ENCODE measurements at regions of chr15 and their contacts with region 1.

Region 1: DNA sequence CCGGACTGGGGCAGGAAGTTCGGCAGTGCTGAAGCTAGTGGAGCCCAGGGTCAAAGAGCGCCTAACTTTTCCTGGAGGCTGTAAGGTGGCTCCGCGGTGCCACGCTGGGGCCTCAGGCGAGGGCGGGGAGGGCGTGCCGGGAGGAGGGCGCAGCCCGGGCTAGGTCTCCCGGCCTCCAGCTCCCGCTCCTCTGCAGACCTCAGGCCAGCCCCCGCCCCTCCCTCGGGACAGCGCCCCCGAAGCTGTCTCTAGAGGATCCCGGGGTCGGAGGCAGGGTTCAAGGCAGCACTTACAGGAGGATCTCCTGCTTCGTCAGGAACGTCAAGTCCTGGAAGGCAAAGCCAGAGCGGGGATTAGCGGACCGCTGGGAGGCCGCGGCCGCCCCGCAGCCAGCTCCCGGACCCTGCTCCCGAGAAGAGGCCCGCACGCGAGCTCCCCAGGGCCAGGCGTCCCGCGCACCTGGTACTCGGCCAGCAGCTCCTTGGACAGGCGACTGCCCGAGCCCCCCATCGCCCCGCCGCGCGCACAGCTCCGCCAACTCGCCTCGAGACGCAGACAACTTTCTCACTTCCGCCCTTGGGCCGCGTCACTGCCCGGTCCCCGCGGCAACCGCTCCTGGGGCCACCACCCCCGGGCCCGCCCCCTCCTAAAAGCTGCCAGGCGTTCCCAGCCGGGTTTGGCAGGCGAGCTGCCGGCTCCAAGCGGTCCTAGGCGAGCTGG is at the start of gene CIB1:
- DNase-seq: peak in 8 of 9 experiments; percentile 32 to 98 (median 94)
- ATAC-seq: peak; percentile 76
- H3K4me3 ChIP-seq: peak within 1 kb of the TSS; percentile 73 to 86
- H3K4me3 Mint-ChIP-seq: peak within 1 kb of the TSS; percentile 94
- H3K27ac ChIP-seq: peak within 1 kb of the TSS; percentile 93
- H3K27ac Mint-ChIP-seq: peak within 1 kb of the TSS; percentile 98
- H3K4me1 ChIP-seq: peaks cover 47% of the 10 kb centered on the region
- H3K4me1 Mint-ChIP-seq: peaks cover 60% of the 10 kb centered on the region
- H3K27me3 ChIP-seq: no peaks in the 10 kb centered on the region
- H3K27me3 Mint-ChIP-seq: no peaks in the 10 kb centered on the region
- CTCF ChIP-seq: no peak
- total RNA-seq, gene CIB1: 251 to 268 TPM

Region 2: DNA sequence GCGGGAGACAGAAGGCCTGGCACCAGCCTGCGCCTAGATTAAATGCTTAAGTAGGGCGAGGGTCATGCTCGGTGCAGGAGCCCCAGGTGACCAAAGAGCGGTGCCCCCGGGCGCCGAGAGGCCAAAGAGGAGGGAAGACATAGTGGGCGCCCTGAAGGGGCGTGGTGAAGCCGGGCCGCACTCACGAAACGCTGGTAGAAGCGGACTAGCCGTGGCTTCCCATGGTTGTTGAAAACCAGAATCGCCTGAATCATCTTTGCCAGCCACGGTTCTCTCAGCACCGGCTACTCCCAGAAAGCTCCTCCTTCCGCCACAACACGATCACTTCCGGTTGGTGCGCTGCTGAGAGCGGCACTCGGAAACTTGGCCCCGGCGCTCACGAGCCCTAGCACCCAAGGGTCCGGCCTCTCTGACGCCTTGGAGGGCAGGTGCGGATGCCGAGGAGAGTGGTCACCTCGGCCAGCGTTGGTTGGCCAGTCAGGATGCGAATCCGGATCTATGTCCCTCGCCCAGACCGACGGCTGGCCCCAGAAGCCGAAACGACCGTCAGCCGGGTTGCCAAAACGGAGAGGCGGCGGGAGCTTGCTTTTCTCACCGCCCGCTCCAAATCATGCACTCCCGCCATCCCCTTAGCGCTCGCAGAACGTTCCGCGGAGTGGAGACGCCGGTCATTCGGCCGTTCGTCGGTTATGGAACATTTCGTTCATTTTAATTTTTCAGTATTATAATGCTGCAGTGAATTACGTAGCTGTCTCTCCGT is 339.7 kb before region 1 on chr15 and contains the start of gene AP3S2:
- CTCF ChIA-PET with region 1: no interaction called
- POLR2A ChIA-PET with region 1: interaction called, 3 read pairs
- intact Hi-C with region 1: loop called in 1 of 2 experiments (anchors 10 kb)
- DNase-seq: peak; percentile 78 to 93 (median 88)
- ATAC-seq: peak; percentile 92
- H3K4me3 ChIP-seq: peak within 1 kb of the TSS; percentile 80 to 91
- H3K4me3 Mint-ChIP-seq: peak within 1 kb of the TSS; percentile 93
- H3K27ac ChIP-seq: peak within 1 kb of the TSS; percentile 73 to 75
- H3K27ac Mint-ChIP-seq: peak within 1 kb of the TSS; percentile 95
- H3K4me1 ChIP-seq: peaks cover 18% of the 10 kb centered on the region
- H3K4me1 Mint-ChIP-seq: peaks cover 30% of the 10 kb centered on the region
- H3K27me3 ChIP-seq: no peaks in the 10 kb centered on the region
- H3K27me3 Mint-ChIP-seq: no peaks in the 10 kb centered on the region
- CTCF ChIP-seq: no peak
- total RNA-seq, gene AP3S2: 14.2 to 16.0 TPM

Region 3: DNA sequence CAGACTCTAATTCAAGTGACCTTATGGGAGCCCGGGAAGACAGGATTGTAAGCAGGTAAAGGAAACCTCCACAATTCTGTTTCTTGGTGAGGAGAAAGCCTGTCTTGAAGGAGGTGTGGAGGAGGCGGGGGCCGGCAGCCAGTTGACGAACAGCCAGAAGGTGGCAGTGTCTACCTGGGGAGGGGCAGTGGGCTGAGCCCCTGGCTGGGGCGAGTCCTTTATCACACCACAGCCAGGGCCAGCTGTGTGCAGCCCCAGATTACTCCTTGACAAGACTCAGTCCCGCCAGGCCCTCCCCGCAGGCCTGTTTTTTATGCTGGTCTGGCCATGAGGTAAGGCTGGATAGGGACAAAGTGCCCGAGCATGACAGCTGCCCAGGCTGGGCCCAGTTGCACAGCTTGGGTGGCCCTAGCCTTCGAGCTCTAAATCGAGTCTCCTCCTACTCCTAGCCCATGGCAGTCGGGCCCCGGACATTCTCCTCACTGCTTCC is 90.3 kb before region 1 on chr15:
- CTCF ChIA-PET with region 1: no interaction called
- POLR2A ChIA-PET with region 1: no interaction called
- intact Hi-C with region 1: loop called (anchors 5 kb)
- DNase-seq: peak; percentile 25 to 73 (median 62)
- ATAC-seq: peak; percentile 66
- H3K4me3 ChIP-seq: peak overlapping the region in 1 of 2 experiments; percentile 0
- H3K4me3 Mint-ChIP-seq: peak overlapping the region; percentile 61
- H3K27ac ChIP-seq: no peak overlapping the region
- H3K27ac Mint-ChIP-seq: no peak overlapping the region
- H3K4me1 ChIP-seq: peaks cover 16% of the 10 kb centered on the region
- H3K4me1 Mint-ChIP-seq: peaks cover 24% of the 10 kb centered on the region
- H3K27me3 ChIP-seq: no peaks in the 10 kb centered on the region
- H3K27me3 Mint-ChIP-seq: no peaks in the 10 kb centered on the region
- CTCF ChIP-seq: peak; percentile 70

Region 4: GRCh38 chr15:90201130-90201949 is 32.2 kb before region 1 on chr15 and contains the start of gene SEMA4B:
- CTCF ChIA-PET with region 1: interaction called, 8 read pairs
- POLR2A ChIA-PET with region 1: interaction called, 56 read pairs
- intact Hi-C with region 1: loop called (anchors 1 kb)
- DNase-seq: peak; percentile 37 to 86 (median 74)
- ATAC-seq: peak; percentile 91
- H3K4me3 ChIP-seq: peak within 1 kb of the TSS; percentile 69 to 79
- H3K4me3 Mint-ChIP-seq: peak within 1 kb of the TSS; percentile 88
- H3K27ac ChIP-seq: peak within 1 kb of the TSS; percentile 56 to 60
- H3K27ac Mint-ChIP-seq: peak within 1 kb of the TSS; percentile 82
- H3K4me1 ChIP-seq: peaks cover 21% of the 10 kb centered on the region
- H3K4me1 Mint-ChIP-seq: peaks cover 22% of the 10 kb centered on the region
- H3K27me3 ChIP-seq: no peaks in the 10 kb centered on the region
- H3K27me3 Mint-ChIP-seq: no peaks in the 10 kb centered on the region
- CTCF ChIP-seq: no peak
- total RNA-seq, gene SEMA4B: 7.5 to 12.3 TPM

Region 5: DNA sequence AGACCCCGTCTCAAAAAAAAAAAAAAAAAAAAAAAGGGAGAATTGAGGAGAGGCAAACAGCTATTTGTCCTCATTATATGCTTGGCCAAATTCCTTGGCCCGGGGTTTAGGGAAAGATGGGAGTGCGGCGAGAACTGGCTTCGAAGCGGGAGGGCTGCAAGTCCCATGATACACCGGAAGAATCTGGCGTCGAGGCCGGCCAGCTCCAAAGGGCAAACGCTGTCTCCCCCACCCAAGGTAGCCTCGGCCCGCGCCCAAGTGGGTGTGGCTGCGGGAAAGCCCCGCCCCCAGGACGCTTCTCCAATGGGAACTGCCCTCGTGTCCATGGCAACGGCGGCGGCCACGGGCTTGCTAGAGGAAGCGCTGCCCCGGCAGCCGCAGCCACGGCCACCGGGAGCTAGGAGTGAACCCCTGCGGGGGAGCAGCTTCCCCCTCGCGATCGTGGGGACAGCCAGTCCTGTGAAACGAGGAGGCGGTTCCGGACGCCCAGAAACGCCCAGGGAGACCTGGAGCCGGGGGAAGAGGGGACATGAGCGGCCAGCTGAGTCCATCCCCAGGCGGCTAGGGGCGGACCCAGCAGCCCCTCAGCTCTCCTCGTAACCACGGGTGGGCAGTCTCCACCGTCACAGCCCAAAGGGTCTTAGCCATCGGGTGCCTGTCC is 15.8 kb after region 1 on chr15 and contains the start of gene TTLL13:
- CTCF ChIA-PET with region 1: interaction called, 5 read pairs
- POLR2A ChIA-PET with region 1: interaction called, 14 read pairs
- intact Hi-C with region 1: loop called in 1 of 2 experiments (anchors 1 kb)
- DNase-seq: peak in 8 of 9 experiments; percentile 53 to 82 (median 72)
- ATAC-seq: peak; percentile 59
- H3K4me3 ChIP-seq: peak within 1 kb of the TSS; percentile 60 to 64
- H3K4me3 Mint-ChIP-seq: peak within 1 kb of the TSS; percentile 69
- H3K27ac ChIP-seq: peak within 1 kb of the TSS in 1 of 2 experiments; percentile 27
- H3K27ac Mint-ChIP-seq: no peak within 1 kb of the TSS
- H3K4me1 ChIP-seq: peaks cover 7% of the 10 kb centered on the region
- H3K4me1 Mint-ChIP-seq: peaks cover 13% of the 10 kb centered on the region
- H3K27me3 ChIP-seq: no peaks in the 10 kb centered on the region
- H3K27me3 Mint-ChIP-seq: no peaks in the 10 kb centered on the region
- CTCF ChIP-seq: no peak
- total RNA-seq, gene TTLL13: 0.28 to 1.1 TPM

Region 6: DNA sequence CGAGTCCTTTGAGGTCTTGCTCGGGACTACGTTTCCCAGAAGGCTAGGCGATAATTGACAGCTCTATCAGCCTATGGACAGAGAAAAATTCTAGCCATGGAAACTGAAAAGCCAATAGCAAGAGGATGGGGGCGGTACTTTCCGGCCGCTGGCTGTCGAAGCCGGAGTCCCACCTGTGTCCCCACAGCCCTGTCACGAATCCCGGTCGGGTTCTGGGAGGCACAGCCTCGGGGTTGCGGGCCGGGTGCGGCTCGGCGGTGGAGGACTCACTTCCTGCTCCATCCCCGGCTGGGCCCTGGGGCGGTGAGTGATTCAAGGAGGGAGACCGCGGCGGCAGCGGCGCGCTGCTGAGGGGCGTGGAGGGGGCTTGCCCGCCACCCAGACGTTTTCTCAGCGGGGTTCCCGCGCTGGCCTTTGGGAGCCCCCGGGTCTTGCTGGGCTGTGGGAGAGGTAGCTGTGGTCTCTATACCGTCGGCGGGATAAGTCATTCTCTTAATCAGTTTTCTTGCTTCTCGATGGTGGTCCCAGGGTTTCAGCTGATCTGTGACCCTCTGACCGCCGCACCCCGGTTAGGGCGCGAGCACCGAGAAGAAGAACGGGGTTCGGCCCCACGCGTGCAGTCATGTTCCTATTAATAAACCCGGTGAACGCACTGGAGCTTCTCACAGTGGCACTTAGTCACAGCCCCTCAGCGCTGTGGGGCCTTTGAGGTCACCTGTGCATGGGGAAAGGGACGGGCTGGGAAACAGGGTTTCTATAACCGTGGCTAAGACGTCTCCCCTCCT is 118.8 kb after region 1 on chr15 and contains the start of gene ZNF774:
- CTCF ChIA-PET with region 1: no interaction called
- POLR2A ChIA-PET with region 1: no interaction called
- intact Hi-C with region 1: loop called in 1 of 2 experiments (anchors 5 kb)
- DNase-seq: peak; percentile 76 to 97 (median 89)
- ATAC-seq: peak; percentile 97
- H3K4me3 ChIP-seq: peak within 1 kb of the TSS; percentile 66 to 69
- H3K4me3 Mint-ChIP-seq: peak within 1 kb of the TSS; percentile 90
- H3K27ac ChIP-seq: peak within 1 kb of the TSS in 1 of 2 experiments; percentile 18
- H3K27ac Mint-ChIP-seq: peak within 1 kb of the TSS; percentile 79
- H3K4me1 ChIP-seq: peaks cover 5% of the 10 kb centered on the region
- H3K4me1 Mint-ChIP-seq: peaks cover 7% of the 10 kb centered on the region
- H3K27me3 ChIP-seq: no peaks in the 10 kb centered on the region
- H3K27me3 Mint-ChIP-seq: no peaks in the 10 kb centered on the region
- CTCF ChIP-seq: no peak
- total RNA-seq, gene ZNF774: 0.08 TPM in 1 of 2 experiments, not detected in the other

Region 7: GRCh38 chr15:90400406-90401314 is 167.1 kb after region 1 on chr15:
- CTCF ChIA-PET with region 1: no interaction called
- POLR2A ChIA-PET with region 1: no interaction called
- intact Hi-C with region 1: loop called in 1 of 2 experiments (anchors 5 kb)
- DNase-seq: peak; percentile 34 to 96 (median 64)
- ATAC-seq: peak; percentile 91
- H3K4me3 ChIP-seq: peak overlapping the region in 1 of 2 experiments; percentile 18
- H3K4me3 Mint-ChIP-seq: peak overlapping the region; percentile 69
- H3K27ac ChIP-seq: peak overlapping the region; percentile 74 to 96
- H3K27ac Mint-ChIP-seq: peak overlapping the region; percentile 96
- H3K4me1 ChIP-seq: peaks cover 36% of the 10 kb centered on the region
- H3K4me1 Mint-ChIP-seq: peaks cover 66% of the 10 kb centered on the region
- H3K27me3 ChIP-seq: no peaks in the 10 kb centered on the region
- H3K27me3 Mint-ChIP-seq: no peaks in the 10 kb centered on the region
- CTCF ChIP-seq: no peak